HepG2 (cell line): ENCODE measurements at regions of chr12 and their contacts with region 1.

Region 1: GRCh38 chr12:120428597-120429229 is 9.2 kb upstream of the COX6A1 start:
- DNase-seq: no peak
- ATAC-seq: no peak
- H3K4me3 ChIP-seq: no peak overlapping the region
- H3K27ac ChIP-seq: no peak overlapping the region
- H3K4me1 ChIP-seq: peaks cover 13% of the 10 kb centered on the region
- H3K27me3 ChIP-seq: no peaks in the 10 kb centered on the region
- CTCF ChIP-seq: no peak
- EP300 ChIP-seq: no peak
- POLR2A ChIP-seq: no peak
- RAD21 ChIP-seq: no peak

Region 2: DNA sequence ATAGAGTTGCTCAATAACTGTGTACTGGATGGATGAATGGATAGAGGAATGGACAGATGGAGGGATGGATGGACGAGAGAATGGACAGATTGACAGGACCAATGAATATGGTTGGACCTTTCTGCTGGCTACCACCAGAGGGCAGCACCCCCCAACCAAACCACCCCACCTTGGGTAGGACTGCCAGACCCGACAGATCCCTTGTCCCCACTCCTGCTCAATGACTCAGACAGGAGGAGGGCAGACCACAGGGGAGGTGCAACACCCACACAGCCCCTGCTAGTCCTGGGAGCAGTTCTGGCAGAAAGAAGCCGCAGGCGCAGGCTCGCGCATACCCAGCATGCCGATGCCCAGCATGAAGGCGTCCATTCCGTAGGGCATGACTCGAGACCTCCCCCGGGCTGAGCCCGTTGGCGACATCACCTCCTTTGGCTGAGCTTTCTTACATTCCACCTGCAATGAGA is 72.1 kb before region 1 on chr12:
- CTCF ChIA-PET with region 1: interaction called, 48 read pairs
- POLR2A ChIA-PET with region 1: no interaction called
- in situ Hi-C with region 1: loop called (anchors 5 kb)
- intact Hi-C with region 1: loop called (anchors 1 kb)
- DNase-seq: peak; percentile 56
- ATAC-seq: peak; percentile 92
- H3K4me3 ChIP-seq: no peak overlapping the region
- H3K27ac ChIP-seq: no peak overlapping the region
- H3K4me1 ChIP-seq: no peaks in the 10 kb centered on the region
- H3K27me3 ChIP-seq: no peaks in the 10 kb centered on the region; a peak in 1 of 5 replicates
- CTCF ChIP-seq: peak; percentile 95
- EP300 ChIP-seq: no peak
- POLR2A ChIP-seq: no peak
- RAD21 ChIP-seq: peak; percentile 91